Mammary epithelial cell (primary cell): ENCODE measurements at regions of chr20 and their contacts with region 1.

Region 1: DNA sequence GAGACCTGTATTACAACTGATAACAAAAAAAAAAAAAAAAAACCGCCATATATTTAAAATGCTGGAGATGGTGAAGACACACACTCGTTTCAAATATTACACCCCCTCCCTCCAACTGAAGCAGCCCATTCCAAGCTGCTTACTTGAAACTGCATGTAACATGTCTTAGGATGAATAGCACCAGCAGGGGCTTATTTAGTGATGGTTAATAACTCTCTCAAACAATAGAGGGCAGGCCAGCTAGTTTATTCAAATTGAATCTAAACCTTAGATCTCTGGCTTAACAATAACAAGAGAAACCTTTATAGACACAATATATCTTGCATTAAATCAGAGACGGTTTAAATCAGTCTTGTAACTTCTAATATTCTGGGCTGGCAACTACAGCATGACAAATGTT is 9.3 kb upstream of the JPH2 start:
- DNase-seq: no peak
- H3K4me3 ChIP-seq: no peak overlapping the region
- H3K27ac ChIP-seq: no peak overlapping the region
- H3K4me1 ChIP-seq: no peaks in the 10 kb centered on the region
- H3K27me3 ChIP-seq: no peaks in the 10 kb centered on the region
- CTCF ChIP-seq: peak; percentile 11 to 18

Region 2: DNA sequence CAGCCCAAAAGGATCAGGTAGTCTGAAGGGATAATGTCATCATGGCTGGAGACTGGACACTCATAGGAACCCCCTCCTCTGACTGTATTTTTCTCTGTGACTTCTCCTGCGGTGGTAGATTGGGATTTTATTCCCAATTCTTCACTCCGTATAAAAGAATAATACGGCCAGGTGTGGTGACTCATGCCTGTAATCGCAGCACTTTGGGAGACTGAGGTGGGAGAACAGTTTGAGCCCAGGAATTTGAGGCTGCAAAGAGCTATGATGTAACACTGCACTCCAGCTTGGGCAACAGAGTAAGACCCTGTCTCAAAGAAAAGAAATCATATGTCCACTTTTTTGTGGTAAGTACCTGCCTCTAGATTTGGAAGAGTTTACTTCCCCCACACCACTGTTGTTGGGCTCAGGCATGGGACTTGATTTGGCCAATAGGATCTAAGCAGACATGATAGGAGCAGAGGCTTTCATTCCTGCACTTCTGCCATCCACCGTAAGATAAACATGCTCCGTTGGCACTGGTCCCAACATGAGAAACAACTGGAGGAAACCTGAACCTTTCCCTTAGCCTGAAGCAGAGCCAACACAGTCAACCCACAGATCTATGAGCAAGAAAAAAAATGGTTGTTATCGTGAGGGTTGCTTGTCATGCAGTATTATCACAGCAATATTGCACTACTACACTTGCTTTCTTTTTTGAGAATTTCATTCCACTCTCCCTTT is 91.3 kb before region 1 on chr20:
- CTCF ChIA-PET with region 1: no interaction called
- dilution Hi-C with region 1: loop called (anchors 5 kb)
- in situ Hi-C with region 1: no loop called
- intact Hi-C with region 1: no loop called
- DNase-seq: peak; percentile 72
- H3K4me3 ChIP-seq: no peak overlapping the region
- H3K27ac ChIP-seq: no peak overlapping the region
- H3K4me1 ChIP-seq: peaks cover 14% of the 10 kb centered on the region
- H3K27me3 ChIP-seq: no peaks in the 10 kb centered on the region
- CTCF ChIP-seq: no peak